ENCODE measurements at regions of chr12 and their contacts with region 1.

Region 1: DNA sequence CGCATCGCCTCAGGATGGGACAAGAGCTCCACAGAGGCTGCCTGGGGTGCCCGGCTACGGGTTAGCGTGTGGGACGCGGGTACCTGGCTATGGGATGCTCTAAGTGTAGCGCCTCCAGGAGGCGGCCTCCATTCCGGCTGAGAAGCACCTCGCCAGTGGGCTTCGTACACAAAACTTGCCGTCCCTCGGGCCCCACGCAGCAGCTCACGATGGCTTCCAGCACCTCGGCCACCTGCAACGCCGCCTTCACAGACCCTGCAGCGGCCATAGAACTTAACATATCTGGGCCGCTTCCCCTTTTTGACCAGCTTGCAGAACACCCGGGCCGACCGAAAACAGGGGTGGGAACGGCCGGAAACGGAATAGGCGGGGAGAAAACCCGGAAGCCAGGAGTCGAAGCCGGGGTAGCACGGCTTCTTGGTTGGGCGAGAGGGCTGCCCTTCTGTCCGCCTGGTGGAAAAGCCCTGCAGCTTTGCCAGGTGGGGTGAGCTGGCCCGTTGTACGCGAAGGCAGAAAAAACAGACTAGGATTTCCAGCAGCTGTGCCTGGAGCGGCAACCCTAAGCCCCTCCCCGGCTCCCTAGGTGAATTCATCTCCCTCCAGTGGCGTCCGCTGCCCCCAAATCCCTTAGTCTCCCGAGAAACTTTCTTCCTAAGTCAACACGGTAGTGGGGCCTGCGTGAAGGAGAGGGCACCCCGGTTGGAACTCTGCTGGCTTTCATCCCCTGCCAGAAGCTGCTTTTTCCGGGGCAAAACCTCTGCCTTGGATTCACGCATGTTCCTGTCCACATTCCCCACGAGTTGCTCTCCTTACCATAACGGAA is at the start of gene BBS10:
- DNase-seq: peak; percentile 91
- ATAC-seq: peak; percentile 96
- H3K4me3 ChIP-seq: peak within 1 kb of the TSS; percentile 79
- H3K27ac ChIP-seq: peak within 1 kb of the TSS; percentile 91
- H3K4me1 ChIP-seq: peaks cover 5% of the 10 kb centered on the region; the same call in 1 of the 2 replicates
- H3K27me3 ChIP-seq: no peaks in the 10 kb centered on the region
- CTCF ChIP-seq: peak; percentile 42
- POLR2A ChIP-seq: no peak
- RAD21 ChIP-seq: peak; percentile 39; the same call in 1 of the 2 replicates
- total RNA-seq, gene BBS10: 10.0 and 15.8 TPM in 2 replicates

Region 2: GRCh38 chr12:76031537-76032073 is 316.7 kb before region 1 on chr12 and contains the start of gene PHLDA1:
- CTCF ChIA-PET with region 1: interaction called, 6 read pairs
- POLR2A ChIA-PET with region 1: interaction called, 6 read pairs
- dilution Hi-C with region 1: no loop called
- in situ Hi-C with region 1: loop called (anchors 5 kb)
- intact Hi-C with region 1: loop called (anchors 1 kb)
- DNase-seq: peak; percentile 97
- ATAC-seq: peak; percentile 81
- H3K4me3 ChIP-seq: peak within 1 kb of the TSS; percentile 98
- H3K27ac ChIP-seq: peak within 1 kb of the TSS; percentile 98
- H3K4me1 ChIP-seq: peaks cover 7% of the 10 kb centered on the region
- H3K27me3 ChIP-seq: no peaks in the 10 kb centered on the region
- CTCF ChIP-seq: peak; percentile 74
- POLR2A ChIP-seq: peak; percentile 100
- RAD21 ChIP-seq: peak; percentile 73
- total RNA-seq, gene PHLDA1: 27.8 and 47.8 TPM in 2 replicates

Region 3: DNA sequence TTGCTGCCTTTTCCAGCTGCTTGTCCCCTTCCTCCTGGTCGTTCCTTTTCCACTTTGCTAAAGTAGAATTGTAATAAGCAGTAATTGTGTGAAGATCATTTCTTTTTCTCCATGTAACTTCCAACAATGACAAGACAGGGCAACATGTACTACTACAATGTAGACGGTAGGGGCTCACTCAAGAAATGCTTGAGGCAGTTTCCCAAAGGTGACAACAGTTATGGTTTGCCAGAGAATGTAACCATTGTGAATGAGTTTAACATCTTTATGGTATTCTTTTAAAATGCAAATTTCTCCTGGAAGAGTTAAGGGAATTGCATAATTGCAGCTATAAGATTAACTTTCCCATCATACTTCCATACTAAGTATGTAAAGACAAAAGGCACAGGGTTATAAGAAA is 292.9 kb before region 1 on chr12:
- CTCF ChIA-PET with region 1: interaction called, 11 read pairs
- POLR2A ChIA-PET with region 1: no interaction called
- dilution Hi-C with region 1: no loop called
- in situ Hi-C with region 1: no loop called
- intact Hi-C with region 1: loop called (anchors 5 kb)
- DNase-seq: no peak
- ATAC-seq: no peak
- H3K4me3 ChIP-seq: no peak overlapping the region
- H3K27ac ChIP-seq: no peak overlapping the region
- H3K4me1 ChIP-seq: peaks cover 6% of the 10 kb centered on the region
- H3K27me3 ChIP-seq: no peaks in the 10 kb centered on the region
- CTCF ChIP-seq: 0 out of 2 replicates have a peak, but pooled peaks have one; percentile 7
- POLR2A ChIP-seq: no peak
- RAD21 ChIP-seq: no peak

Region 4: DNA sequence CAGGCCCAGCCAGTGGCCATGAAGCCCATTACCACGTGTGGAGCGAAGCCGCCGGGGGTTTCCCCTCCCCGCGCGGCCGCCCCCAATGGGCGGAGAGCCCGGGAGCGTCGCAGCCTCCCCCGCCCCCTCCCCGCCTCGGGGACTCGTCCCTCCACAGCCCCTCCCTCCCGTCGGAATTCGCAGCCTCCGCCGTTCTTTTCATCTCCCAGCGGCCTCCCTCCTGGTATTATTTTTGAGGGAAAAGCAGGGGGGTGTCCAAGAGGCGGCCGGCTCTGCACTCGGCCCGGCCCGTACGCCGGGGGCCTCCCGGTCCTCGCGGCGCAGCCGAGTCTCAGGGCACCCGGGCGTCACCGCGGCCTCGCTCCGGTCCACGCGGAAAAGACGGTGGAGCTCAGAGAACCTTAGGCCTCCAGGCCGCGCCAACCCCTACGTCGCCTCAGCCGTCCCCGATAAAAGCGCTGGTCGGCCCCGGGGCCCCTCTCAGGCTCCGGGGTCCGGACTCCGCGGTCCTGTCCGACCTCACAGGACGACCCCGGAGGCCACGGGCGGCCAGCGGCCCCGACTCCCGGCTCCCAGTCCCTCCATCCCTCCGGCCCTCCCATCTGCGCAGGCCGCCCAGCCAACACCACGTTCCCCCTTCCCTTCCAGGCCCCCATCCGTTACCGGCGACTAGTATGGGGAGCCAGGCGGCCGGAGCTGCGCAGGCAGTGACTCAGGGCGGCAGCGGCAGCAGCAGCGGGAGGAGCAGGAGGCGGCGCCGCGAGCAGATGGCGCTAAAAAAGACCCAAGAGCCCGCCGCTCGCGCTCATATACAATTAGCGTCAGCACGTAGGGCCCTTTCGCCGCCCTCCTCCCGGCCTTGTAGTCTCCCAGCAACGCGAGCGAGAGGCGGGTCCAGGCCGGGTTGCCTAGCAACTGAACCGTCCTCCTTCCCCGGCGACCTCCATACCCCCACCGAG is 264.1 kb before region 1 on chr12 and contains the start of gene NAP1L1:
- CTCF ChIA-PET with region 1: interaction called, 3 read pairs
- POLR2A ChIA-PET with region 1: interaction called, 3 read pairs
- dilution Hi-C with region 1: no loop called
- in situ Hi-C with region 1: loop called (anchors 10 kb)
- intact Hi-C with region 1: loop called (anchors 1 kb)
- DNase-seq: peak; percentile 98
- ATAC-seq: peak; percentile 87
- H3K4me3 ChIP-seq: peak within 1 kb of the TSS; percentile 82
- H3K27ac ChIP-seq: peak within 1 kb of the TSS; percentile 94
- H3K4me1 ChIP-seq: peaks cover 4% of the 10 kb centered on the region
- H3K27me3 ChIP-seq: no peaks in the 10 kb centered on the region
- CTCF ChIP-seq: peak; percentile 17; the same call in 1 of the 2 replicates
- POLR2A ChIP-seq: peak; percentile 96
- RAD21 ChIP-seq: peak; percentile 34
- total RNA-seq, gene NAP1L1: 86.4 and 166 TPM in 2 replicates

Region 5: GRCh38 chr12:76183459-76184186 is 164.7 kb before region 1 on chr12:
- CTCF ChIA-PET with region 1: no interaction called
- POLR2A ChIA-PET with region 1: no interaction called
- dilution Hi-C with region 1: no loop called
- in situ Hi-C with region 1: no loop called
- intact Hi-C with region 1: loop called (anchors 5 kb)
- DNase-seq: peak; percentile 99
- ATAC-seq: peak; percentile 98
- H3K4me3 ChIP-seq: no peak overlapping the region
- H3K27ac ChIP-seq: no peak overlapping the region
- H3K4me1 ChIP-seq: peaks cover 8% of the 10 kb centered on the region
- H3K27me3 ChIP-seq: no peaks in the 10 kb centered on the region
- CTCF ChIP-seq: no peak
- POLR2A ChIP-seq: no peak
- RAD21 ChIP-seq: no peak; the same call in 1 of the 2 replicates

Region 6: GRCh38 chr12:76226397-76226796 is 121.9 kb before region 1 on chr12:
- CTCF ChIA-PET with region 1: no interaction called
- POLR2A ChIA-PET with region 1: no interaction called
- dilution Hi-C with region 1: no loop called
- in situ Hi-C with region 1: no loop called
- intact Hi-C with region 1: no loop called
- DNase-seq: peak; percentile 84
- ATAC-seq: peak; percentile 79
- H3K4me3 ChIP-seq: no peak overlapping the region
- H3K27ac ChIP-seq: no peak overlapping the region
- H3K4me1 ChIP-seq: peaks cover 4% of the 10 kb centered on the region
- H3K27me3 ChIP-seq: no peaks in the 10 kb centered on the region
- CTCF ChIP-seq: no peak
- POLR2A ChIP-seq: no peak
- RAD21 ChIP-seq: no peak

Region 7: GRCh38 chr12:76586764-76587395 is 238.6 kb after region 1 on chr12:
- CTCF ChIA-PET with region 1: interaction called, 3 read pairs
- POLR2A ChIA-PET with region 1: no interaction called
- dilution Hi-C with region 1: no loop called
- in situ Hi-C with region 1: no loop called
- intact Hi-C with region 1: loop called (anchors 2 kb)
- DNase-seq: peak; percentile 67
- ATAC-seq: peak; percentile 55; the same call in 1 of the 2 replicates
- H3K4me3 ChIP-seq: no peak overlapping the region
- H3K27ac ChIP-seq: no peak overlapping the region
- H3K4me1 ChIP-seq: peaks cover 8% of the 10 kb centered on the region
- H3K27me3 ChIP-seq: no peaks in the 10 kb centered on the region
- CTCF ChIP-seq: peak; percentile 71
- POLR2A ChIP-seq: no peak
- RAD21 ChIP-seq: peak; percentile 68

Region 8: GRCh38 chr12:76643438-76643837 is 295.1 kb after region 1 on chr12:
- CTCF ChIA-PET with region 1: no interaction called
- POLR2A ChIA-PET with region 1: no interaction called
- dilution Hi-C with region 1: no loop called
- in situ Hi-C with region 1: no loop called
- intact Hi-C with region 1: no loop called
- DNase-seq: peak; percentile 80
- ATAC-seq: peak; percentile 80
- H3K4me3 ChIP-seq: no peak overlapping the region
- H3K27ac ChIP-seq: no peak overlapping the region
- H3K4me1 ChIP-seq: no peaks in the 10 kb centered on the region
- H3K27me3 ChIP-seq: no peaks in the 10 kb centered on the region
- CTCF ChIP-seq: no peak
- POLR2A ChIP-seq: no peak
- RAD21 ChIP-seq: no peak

Measured in IMR-90 (cell line).